WTC11 (cell line): ENCODE measurements at regions of chr10 and their contacts with region 1.

Region 1: GRCh38 chr10:95374597-95375209 is 83.9 kb upstream of the PDLIM1 start:
- DNase-seq: peak; percentile 86
- ATAC-seq: peak; percentile 98
- H3K4me3 Mint-ChIP-seq: no peak overlapping the region
- H3K27ac Mint-ChIP-seq: no peak overlapping the region
- H3K4me1 Mint-ChIP-seq: peaks cover 28% of the 10 kb centered on the region
- H3K27me3 Mint-ChIP-seq: no peaks in the 10 kb centered on the region
- CTCF ChIP-seq: peak; percentile 99

Region 2: DNA sequence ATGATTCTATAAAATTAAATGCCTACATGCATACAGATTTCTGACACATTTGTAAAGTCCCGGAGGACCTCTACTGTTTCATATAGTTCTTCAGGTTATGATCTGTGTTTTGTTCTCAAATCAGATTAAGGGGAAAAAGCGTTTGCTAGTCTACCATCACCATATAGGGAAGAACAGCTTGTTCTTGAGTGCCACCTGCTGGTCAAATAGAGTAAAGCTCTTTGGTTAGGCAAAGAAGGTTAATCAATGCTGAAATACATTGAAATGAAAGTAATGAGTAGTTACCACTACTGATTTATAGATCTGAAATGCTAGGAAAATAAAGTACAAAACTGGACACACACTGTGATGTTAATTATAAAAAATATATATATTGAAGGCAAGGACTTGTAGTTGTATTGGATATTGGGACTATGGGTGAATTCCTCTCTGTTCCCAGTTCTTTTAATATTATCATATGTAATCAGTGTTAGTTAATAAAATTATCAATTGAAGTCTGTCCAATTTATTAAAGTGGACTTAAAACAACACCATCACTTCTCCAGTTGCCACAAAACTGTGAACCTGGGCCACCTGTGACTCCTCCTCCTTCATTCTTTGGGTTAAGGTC is 11.3 kb before region 1 on chr10:
- CTCF ChIA-PET with region 1: interaction called, 48 read pairs
- POLR2A ChIA-PET with region 1: no interaction called
- DNase-seq: no peak
- ATAC-seq: peak; percentile 60
- H3K4me3 Mint-ChIP-seq: no peak overlapping the region
- H3K27ac Mint-ChIP-seq: no peak overlapping the region; the same call in 1 of the 2 replicates
- H3K4me1 Mint-ChIP-seq: peaks cover 22% of the 10 kb centered on the region
- H3K27me3 Mint-ChIP-seq: no peaks in the 10 kb centered on the region
- CTCF ChIP-seq: peak; percentile 75

Region 3: GRCh38 chr10:95391581-95392216 is 17.0 kb after region 1 on chr10:
- CTCF ChIA-PET with region 1: interaction called, 27 read pairs
- POLR2A ChIA-PET with region 1: interaction called, 4 read pairs
- DNase-seq: peak; percentile 55
- ATAC-seq: peak; percentile 94
- H3K4me3 Mint-ChIP-seq: no peak overlapping the region
- H3K27ac Mint-ChIP-seq: no peak overlapping the region
- H3K4me1 Mint-ChIP-seq: peaks cover 17% of the 10 kb centered on the region
- H3K27me3 Mint-ChIP-seq: no peaks in the 10 kb centered on the region
- CTCF ChIP-seq: no peak

Region 4: DNA sequence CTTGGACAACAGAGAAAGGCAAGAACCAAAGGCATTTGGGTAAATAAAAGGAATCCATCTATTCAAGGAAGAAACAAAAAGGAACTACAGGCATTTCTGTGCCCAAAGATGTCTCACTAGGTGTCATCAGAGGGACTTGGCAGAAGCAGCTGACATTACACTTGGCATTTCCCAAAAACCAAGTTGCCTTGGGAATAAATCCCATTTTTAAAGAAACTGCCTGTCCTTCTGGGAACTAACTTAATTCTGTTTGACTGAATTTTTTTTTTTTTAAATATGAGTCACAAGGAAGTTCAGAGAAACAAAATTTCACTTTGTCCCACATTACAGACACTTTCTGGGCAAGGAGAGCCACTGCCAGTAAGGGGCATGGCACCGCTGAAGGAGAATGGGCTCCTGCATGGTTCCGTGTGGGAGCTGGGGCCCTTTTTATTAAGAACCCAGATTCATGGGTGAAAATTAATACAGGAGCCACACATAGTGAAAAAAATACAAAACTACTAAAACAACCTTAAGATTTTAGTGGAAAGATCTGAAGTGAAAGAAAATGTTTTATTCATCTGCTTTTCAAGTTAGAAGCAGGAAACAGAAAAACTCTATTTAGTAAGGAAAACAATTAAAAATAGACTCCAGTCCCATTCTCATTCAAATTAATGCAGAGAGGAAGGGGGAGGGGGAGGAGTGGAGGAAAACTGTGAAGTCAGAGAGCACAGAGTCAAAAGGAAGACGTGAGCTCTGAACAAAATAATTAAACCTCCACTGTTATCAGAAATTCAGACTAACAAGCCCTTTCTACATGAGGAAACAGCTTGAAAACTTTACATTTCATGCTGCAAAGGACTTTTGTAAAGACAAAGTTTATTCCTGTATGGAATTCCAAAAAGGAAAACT is 34.5 kb after region 1 on chr10:
- CTCF ChIA-PET with region 1: interaction called, 13 read pairs
- POLR2A ChIA-PET with region 1: interaction called, 5 read pairs
- DNase-seq: no peak
- ATAC-seq: peak; percentile 12
- H3K4me3 Mint-ChIP-seq: peak overlapping the region; percentile 48
- H3K27ac Mint-ChIP-seq: peak overlapping the region; percentile 92
- H3K4me1 Mint-ChIP-seq: peaks cover 43% of the 10 kb centered on the region
- H3K27me3 Mint-ChIP-seq: no peaks in the 10 kb centered on the region
- CTCF ChIP-seq: no peak

Region 5: GRCh38 chr10:95445837-95446486 is 71.3 kb after region 1 on chr10:
- CTCF ChIA-PET with region 1: interaction called, 14 read pairs
- POLR2A ChIA-PET with region 1: no interaction called
- DNase-seq: peak; percentile 67
- ATAC-seq: peak; percentile 92
- H3K4me3 Mint-ChIP-seq: no peak overlapping the region
- H3K27ac Mint-ChIP-seq: no peak overlapping the region
- H3K4me1 Mint-ChIP-seq: peaks cover 15% of the 10 kb centered on the region
- H3K27me3 Mint-ChIP-seq: no peaks in the 10 kb centered on the region
- CTCF ChIP-seq: peak; percentile 74